ENCODE measurements at regions of chr1 and their contacts with region 1.

Region 1: GRCh38 chr1:5915587-5916571 is 76.3 kb downstream of the NPHP4 start:
- DNase-seq: no peak
- H3K4me3 Mint-ChIP-seq: no peak overlapping the region
- H3K27ac Mint-ChIP-seq: peak overlapping the region; percentile 47
- H3K4me1 Mint-ChIP-seq: peaks cover 5% of the 10 kb centered on the region
- H3K27me3 Mint-ChIP-seq: no peaks in the 10 kb centered on the region

Region 2: GRCh38 chr1:5466487-5466886 is 449.4 kb before region 1 on chr1:
- intact Hi-C with region 1: no loop called
- DNase-seq: no peak
- H3K4me3 Mint-ChIP-seq: no peak overlapping the region
- H3K27ac Mint-ChIP-seq: no peak overlapping the region
- H3K4me1 Mint-ChIP-seq: peaks cover 3% of the 10 kb centered on the region
- H3K27me3 Mint-ChIP-seq: no peaks in the 10 kb centered on the region

Region 3: DNA sequence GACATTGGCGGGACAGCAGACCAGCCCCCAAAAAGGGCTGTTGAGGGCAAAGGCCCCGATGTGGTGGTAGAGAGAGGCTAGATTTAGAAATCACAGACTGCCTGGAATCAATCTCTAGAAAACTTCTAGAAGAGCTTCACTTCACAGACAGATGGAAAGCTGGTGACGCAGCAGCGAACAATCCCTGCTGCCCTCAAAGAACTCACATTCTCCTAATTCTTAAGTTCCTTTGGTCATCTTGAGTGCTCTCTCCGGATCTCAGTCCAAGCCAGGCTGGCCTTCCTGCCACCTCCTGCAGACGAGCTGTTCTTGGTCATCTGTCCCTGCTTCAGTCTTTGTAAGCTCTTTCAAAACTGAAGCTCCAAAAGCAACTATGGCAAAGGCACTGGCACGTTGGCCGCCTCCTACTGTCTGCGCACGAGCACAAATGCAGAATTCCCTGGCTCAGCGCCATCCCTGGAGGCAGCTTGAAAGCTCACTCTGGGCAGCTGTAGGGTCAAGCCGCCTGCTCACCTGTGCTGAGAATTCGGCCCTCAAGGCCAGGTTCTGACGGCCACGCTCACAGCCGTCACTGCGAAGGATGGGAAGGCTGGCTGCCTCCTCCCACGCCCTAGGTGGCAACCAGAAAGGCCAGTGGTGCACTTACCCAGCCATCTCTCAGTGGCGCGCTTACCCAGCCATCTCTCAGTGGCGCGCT is 34.2 kb before region 1 on chr1:
- intact Hi-C with region 1: loop called (anchors 1 kb)
- DNase-seq: no peak
- H3K4me3 Mint-ChIP-seq: no peak overlapping the region
- H3K27ac Mint-ChIP-seq: no peak overlapping the region
- H3K4me1 Mint-ChIP-seq: no peaks in the 10 kb centered on the region
- H3K27me3 Mint-ChIP-seq: no peaks in the 10 kb centered on the region

Region 4: GRCh38 chr1:6222636-6223035 is 306.8 kb after region 1 on chr1:
- intact Hi-C with region 1: no loop called
- DNase-seq: no peak
- H3K4me3 Mint-ChIP-seq: no peak overlapping the region
- H3K27ac Mint-ChIP-seq: no peak overlapping the region
- H3K4me1 Mint-ChIP-seq: no peaks in the 10 kb centered on the region
- H3K27me3 Mint-ChIP-seq: no peaks in the 10 kb centered on the region

Measured in activated T-helper 2 cell treated with anti-CD3 and anti-CD28 coated beads, Interferon-gamma antibody, Interleukin-2, Interleukin-4, amounts not matched to agents 10 μg/mL and 5 μg/mL and 100 μg/mL, durations not matched to agents 14 hours and 24 hours and 36 hours (primary cell).